ENCODE measurements at regions of chr19 and their contacts with region 1.

Region 1: DNA sequence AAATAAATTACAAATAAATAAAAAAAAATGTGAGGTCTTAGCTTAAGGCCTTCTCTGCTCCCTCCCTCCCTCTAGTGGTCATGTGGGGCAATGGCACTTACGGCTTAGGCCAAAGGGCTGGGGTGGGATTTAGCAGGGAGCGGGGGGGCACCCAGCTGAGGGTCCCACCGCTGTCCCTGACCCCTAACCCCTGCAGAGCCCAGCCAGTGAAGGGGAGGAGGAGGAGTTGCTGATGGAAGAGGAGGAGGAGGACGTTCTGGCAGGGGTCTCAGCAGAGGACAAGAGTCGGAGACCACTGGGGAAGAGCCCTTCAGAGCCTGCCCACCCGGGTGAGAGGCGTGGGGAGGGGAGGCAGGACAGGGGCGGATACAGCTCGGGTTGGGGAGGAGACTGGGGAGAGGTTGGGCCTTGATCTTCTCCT is 9.3 kb downstream of the MPND start:
- DNase-seq: peak; percentile 78
- ATAC-seq: peak; percentile 84
- H3K4me3 Mint-ChIP-seq: no peak overlapping the region
- H3K27ac Mint-ChIP-seq: no peak overlapping the region
- H3K4me1 Mint-ChIP-seq: no peaks in the 10 kb centered on the region
- H3K27me3 Mint-ChIP-seq: no peaks in the 10 kb centered on the region
- CTCF ChIP-seq: peak; percentile 77

Region 2: DNA sequence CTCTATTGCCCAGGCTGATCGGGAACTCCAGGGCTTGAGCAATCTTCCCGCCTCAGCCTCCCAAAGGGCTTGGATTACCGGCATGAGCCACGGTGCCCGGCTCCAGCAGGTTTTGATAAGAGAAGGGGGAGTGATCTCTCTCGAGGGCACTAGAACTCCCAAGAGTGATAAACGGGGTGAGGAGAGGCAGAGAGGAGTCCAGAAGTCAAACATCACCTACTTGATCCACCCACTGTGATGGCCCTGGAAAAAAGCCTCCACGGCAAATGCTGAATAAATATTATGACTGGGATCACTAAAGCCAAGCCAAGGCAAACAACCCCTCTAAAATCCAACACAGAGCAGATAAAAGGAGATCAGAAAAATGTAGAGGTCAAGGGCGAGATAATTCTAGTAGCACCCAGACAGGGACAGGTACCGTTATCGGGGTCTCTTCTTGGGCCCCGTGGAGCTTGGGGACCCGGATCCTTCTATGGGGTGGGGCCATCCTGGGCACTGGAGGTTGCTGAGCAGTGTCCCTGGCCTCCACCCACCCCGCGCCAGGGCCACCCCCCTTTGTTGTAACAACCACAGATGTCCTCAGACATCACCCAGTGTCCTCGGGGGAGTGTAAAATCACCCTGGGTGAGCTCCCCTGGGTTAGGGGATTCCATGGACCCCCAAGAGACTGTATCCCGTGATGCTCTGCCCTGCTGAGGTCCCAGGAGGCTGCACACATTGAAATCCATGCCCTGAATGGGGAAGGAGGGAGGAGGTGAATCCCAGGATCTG is 203.0 kb before region 1 on chr19:
- CTCF ChIA-PET with region 1: no interaction called
- POLR2A ChIA-PET with region 1: no interaction called
- DNase-seq: no peak
- ATAC-seq: no peak
- H3K4me3 Mint-ChIP-seq: no peak overlapping the region
- H3K27ac Mint-ChIP-seq: no peak overlapping the region
- H3K4me1 Mint-ChIP-seq: no peaks in the 10 kb centered on the region
- H3K27me3 Mint-ChIP-seq: peaks cover 28% of the 10 kb centered on the region
- CTCF ChIP-seq: no peak

Region 3: GRCh38 chr19:4304530-4305252 is 48.0 kb before region 1 on chr19 and contains the start of gene FSD1:
- CTCF ChIA-PET with region 1: interaction called, 12 read pairs
- POLR2A ChIA-PET with region 1: no interaction called
- DNase-seq: peak; percentile 87
- ATAC-seq: peak; percentile 93
- H3K4me3 Mint-ChIP-seq: peak within 1 kb of the TSS; percentile 67
- H3K27ac Mint-ChIP-seq: no peak within 1 kb of the TSS
- H3K4me1 Mint-ChIP-seq: peaks cover 17% of the 10 kb centered on the region
- H3K27me3 Mint-ChIP-seq: peaks cover 3% of the 10 kb centered on the region
- CTCF ChIP-seq: no peak
- total RNA-seq, gene FSD1: 61.3 to 69.2 TPM (median 65.7 TPM) in 3 replicates

Region 4: GRCh38 chr19:4328243-4328990 is 24.3 kb before region 1 on chr19:
- CTCF ChIA-PET with region 1: interaction called, 19 read pairs
- POLR2A ChIA-PET with region 1: no interaction called
- DNase-seq: peak; percentile 98
- ATAC-seq: peak; percentile 68
- H3K4me3 Mint-ChIP-seq: peak overlapping the region; percentile 76
- H3K27ac Mint-ChIP-seq: no peak overlapping the region
- H3K4me1 Mint-ChIP-seq: peaks cover 12% of the 10 kb centered on the region
- H3K27me3 Mint-ChIP-seq: peaks cover 3% of the 10 kb centered on the region
- CTCF ChIP-seq: no peak

Region 5: DNA sequence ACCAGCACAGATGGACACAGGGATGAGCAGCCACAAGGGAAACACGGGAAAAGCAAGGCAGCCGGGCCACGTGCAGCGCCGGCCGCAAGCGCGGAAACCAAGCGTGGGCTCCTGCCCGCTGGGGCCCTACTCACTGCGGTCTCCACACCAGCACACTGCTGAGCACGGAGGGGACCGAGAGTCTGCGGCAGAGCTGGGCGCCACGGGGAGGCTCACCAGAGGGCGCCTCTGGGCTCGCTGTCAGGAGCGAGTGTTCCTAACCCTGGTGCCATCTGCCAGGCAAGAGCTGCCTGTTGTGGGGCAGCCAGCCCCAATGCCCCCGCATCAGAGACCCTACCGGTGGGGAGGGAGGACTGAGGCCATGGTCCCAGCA is 17.2 kb after region 1 on chr19:
- CTCF ChIA-PET with region 1: interaction called, 36 read pairs
- POLR2A ChIA-PET with region 1: no interaction called
- DNase-seq: peak; percentile 63
- ATAC-seq: peak; percentile 69
- H3K4me3 Mint-ChIP-seq: no peak overlapping the region
- H3K27ac Mint-ChIP-seq: peak overlapping the region; percentile 88; the same call in 1 of the 2 replicates
- H3K4me1 Mint-ChIP-seq: peaks cover 21% of the 10 kb centered on the region
- H3K27me3 Mint-ChIP-seq: no peaks in the 10 kb centered on the region
- CTCF ChIP-seq: no peak

Region 6: GRCh38 chr19:4390567-4391305 is 38.0 kb after region 1 on chr19:
- CTCF ChIA-PET with region 1: interaction called, 15 read pairs
- POLR2A ChIA-PET with region 1: no interaction called
- DNase-seq: peak; percentile 56
- ATAC-seq: peak; percentile 83
- H3K4me3 Mint-ChIP-seq: peak overlapping the region; percentile 66
- H3K27ac Mint-ChIP-seq: peak overlapping the region; percentile 96
- H3K4me1 Mint-ChIP-seq: peaks cover 46% of the 10 kb centered on the region
- H3K27me3 Mint-ChIP-seq: no peaks in the 10 kb centered on the region; the same call in 1 of the 2 replicates
- CTCF ChIP-seq: no peak